ENCODE measurements at regions of chr1 and their contacts with region 1.

Region 1: GRCh38 chr1:54310439-54311328 is 95.5 kb downstream of the SSBP3 start:
- DNase-seq: peak in 1 of 2 donors; percentile 74
- ATAC-seq: peak; percentile 55 to 77 (median 70)
- H3K4me3 ChIP-seq: no peak overlapping the region
- H3K27ac ChIP-seq: peak overlapping the region; percentile 53
- H3K4me1 ChIP-seq: peaks cover 58% of the 10 kb centered on the region
- H3K27me3 ChIP-seq: no peaks in the 10 kb centered on the region
- CTCF ChIP-seq: peak; percentile 51

Region 2: DNA sequence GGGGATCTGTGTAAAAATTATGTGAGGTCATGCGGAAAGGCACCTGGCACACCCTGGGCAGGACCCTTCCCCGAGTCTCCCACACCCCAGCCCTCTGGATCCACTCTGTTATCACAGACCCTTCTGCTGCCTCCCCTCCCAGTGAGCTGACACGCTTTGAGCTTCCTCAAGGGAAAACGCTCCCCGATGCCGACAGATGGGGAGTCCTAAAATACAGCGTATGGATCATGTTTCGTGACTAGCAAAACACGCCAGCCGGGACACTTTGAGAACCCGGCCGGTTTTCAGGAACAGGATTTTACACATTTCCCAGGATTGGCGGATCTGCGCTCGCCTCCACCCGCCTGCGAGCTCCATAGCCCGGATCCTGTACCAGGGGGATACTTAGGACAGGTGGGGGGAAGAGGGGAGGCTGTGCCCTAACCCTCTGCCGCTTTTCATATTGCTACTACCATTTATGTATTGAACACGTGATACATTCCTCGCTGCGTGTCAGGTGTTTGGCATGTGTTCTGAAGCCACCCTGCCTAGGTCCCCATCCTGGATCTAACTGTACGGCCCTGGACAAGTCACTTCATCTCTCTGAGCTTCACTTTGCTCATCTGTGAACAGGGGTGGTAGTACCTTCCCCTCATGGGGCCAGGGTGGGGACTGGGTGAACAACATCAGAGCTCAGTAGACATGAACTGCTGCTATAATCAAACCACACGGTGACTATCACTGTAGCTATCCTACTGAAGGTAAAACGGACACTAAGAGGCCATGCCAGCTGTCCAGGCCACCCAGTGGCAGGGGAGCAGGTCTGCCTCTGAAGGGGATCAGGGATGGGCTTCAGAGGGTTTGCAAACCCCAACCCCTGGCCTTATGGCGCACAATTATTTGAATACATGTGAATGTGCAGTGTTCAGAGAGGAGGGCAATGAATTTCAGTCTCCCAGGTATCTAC is 32.3 kb after region 1 on chr1:
- intact Hi-C with region 1: loop called in 1 of 2 experiments (anchors 5 kb)
- DNase-seq: no peak
- ATAC-seq: peak; percentile 75 to 82 (median 82)
- H3K4me3 ChIP-seq: peak overlapping the region; percentile 56
- H3K27ac ChIP-seq: peak overlapping the region; percentile 80
- H3K4me1 ChIP-seq: peaks cover 51% of the 10 kb centered on the region
- H3K27me3 ChIP-seq: no peaks in the 10 kb centered on the region
- CTCF ChIP-seq: peak; percentile 48

Region 3: DNA sequence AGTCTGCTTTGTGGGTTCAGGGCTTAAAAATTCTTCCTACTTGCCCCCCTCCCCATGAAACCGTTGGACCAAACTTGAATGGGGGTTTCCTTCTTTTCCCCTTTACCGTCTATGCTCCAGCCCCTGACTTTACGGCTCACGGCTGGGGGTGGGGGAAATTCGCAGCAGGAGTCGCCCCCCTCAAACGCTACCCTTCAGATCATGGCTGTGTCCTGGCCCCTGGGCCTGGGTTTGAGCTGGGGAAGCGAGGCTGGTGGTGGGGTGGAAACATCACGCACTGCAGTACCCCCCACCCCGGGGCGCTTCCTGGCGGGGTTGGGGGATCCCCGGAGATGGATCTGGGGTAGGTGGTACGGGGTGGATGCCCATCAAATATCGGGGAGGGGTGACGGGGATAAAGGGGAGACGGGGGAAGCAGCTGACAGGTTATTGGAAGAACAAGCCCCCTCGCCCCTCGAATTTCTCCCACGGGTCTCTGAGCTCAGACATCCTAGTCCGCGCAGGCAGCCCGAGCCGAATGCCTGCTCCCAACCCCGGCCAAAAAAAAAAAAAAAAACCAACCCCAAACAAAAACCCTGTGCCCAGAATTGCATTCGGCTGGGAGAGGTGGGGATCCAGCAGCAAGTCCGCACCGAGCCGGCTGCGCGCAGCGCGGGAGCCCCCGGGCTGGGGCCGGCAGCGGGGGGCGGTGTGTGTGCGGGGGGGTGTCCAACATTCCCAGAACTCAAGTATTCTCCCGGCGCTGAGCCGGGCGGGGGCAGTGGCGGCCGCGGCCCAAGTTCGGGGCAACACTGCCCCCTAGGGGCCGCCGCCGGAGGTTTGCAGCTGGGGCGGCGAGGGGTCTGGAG is 178.3 kb after region 1 on chr1:
- intact Hi-C with region 1: loop called in 1 of 2 experiments (anchors 2 kb)
- DNase-seq: peak; percentile 78 to 89
- ATAC-seq: peak; percentile 79 to 83 (median 82)
- H3K4me3 ChIP-seq: peak overlapping the region; percentile 81
- H3K27ac ChIP-seq: peak overlapping the region; percentile 87
- H3K4me1 ChIP-seq: peaks cover 27% of the 10 kb centered on the region
- H3K27me3 ChIP-seq: no peaks in the 10 kb centered on the region
- CTCF ChIP-seq: peak; percentile 96

Measured in psoas muscle (tissue), 8 donors.